ENCODE measurements at regions of chr4 and their contacts with region 1.

Region 1: GRCh38 chr4:87235020-87235671 is 14.7 kb upstream of the KLHL8 start:
- DNase-seq: no peak
- ATAC-seq: no peak
- H3K4me3 ChIP-seq: peak overlapping the region; percentile 53
- H3K27ac ChIP-seq: no peak overlapping the region
- H3K4me1 ChIP-seq: peaks cover 2% of the 10 kb centered on the region
- H3K27me3 ChIP-seq: no peaks in the 10 kb centered on the region
- CTCF ChIP-seq: no peak

Region 2: GRCh38 chr4:86927843-86928395 is 307.2 kb before region 1 on chr4:
- intact Hi-C with region 1: loop called (anchors 5 kb)
- DNase-seq: no peak
- ATAC-seq: peak; percentile 57
- H3K4me3 ChIP-seq: no peak overlapping the region
- H3K27ac ChIP-seq: no peak overlapping the region
- H3K4me1 ChIP-seq: no peaks in the 10 kb centered on the region
- H3K27me3 ChIP-seq: no peaks in the 10 kb centered on the region
- CTCF ChIP-seq: no peak

Region 3: DNA sequence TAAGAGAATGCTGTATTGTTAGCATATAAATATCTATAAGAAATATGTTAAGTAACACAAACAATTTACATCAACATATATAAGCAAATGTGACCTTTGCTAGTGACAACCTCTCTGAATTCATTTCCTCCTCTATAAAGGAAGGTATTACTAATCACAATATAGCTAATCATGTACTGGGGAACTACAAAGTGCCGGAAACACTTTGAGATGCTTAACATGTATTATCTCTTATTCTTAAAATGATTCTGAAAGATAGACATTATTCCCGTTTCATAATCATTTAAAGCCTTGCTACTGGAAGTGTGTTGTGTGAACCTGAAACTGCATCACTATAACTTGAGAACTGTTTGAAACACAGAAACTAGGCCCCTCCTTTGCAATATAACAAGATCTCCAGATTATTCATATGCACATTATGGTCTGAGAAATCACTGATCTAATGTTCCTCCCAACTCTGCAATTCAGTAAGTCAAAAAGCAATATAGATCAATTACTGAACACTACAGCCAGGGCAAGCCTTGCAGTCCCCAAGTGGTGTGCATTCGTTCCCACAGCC is 68.8 kb before region 1 on chr4:
- intact Hi-C with region 1: loop called (anchors 10 kb)
- DNase-seq: no peak
- ATAC-seq: no peak
- H3K4me3 ChIP-seq: no peak overlapping the region
- H3K27ac ChIP-seq: no peak overlapping the region
- H3K4me1 ChIP-seq: no peaks in the 10 kb centered on the region
- H3K27me3 ChIP-seq: no peaks in the 10 kb centered on the region
- CTCF ChIP-seq: no peak

Region 4: GRCh38 chr4:87589522-87589921 is 354.4 kb after region 1 on chr4:
- intact Hi-C with region 1: no loop called
- DNase-seq: no peak
- ATAC-seq: peak; percentile 46
- H3K4me3 ChIP-seq: no peak overlapping the region
- H3K27ac ChIP-seq: no peak overlapping the region
- H3K4me1 ChIP-seq: no peaks in the 10 kb centered on the region
- H3K27me3 ChIP-seq: no peaks in the 10 kb centered on the region
- CTCF ChIP-seq: no peak